Uterus (tissue), 4 donors: ENCODE measurements at regions of chr7 and their contacts with region 1.

Region 1: GRCh38 chr7:2555121-2556052 is at the start of gene BRAT1:
- DNase-seq: peak; percentile 95 to 97
- H3K4me3 ChIP-seq: peak within 1 kb of the TSS; percentile 69 to 94
- H3K27ac ChIP-seq: peak within 1 kb of the TSS; percentile 98
- H3K4me1 ChIP-seq: peaks cover 0 to 9% of the 10 kb centered on the region in 2 donors
- H3K27me3 ChIP-seq: no peaks in the 10 kb centered on the region
- CTCF ChIP-seq: peak in 3 of 4 experiments; percentile 25 to 46 (median 45)
- POLR2A ChIP-seq: peak; percentile 36 to 70
- total RNA-seq, gene BRAT1: 10.3 to 44.3 (median 36.0) TPM

Region 2: GRCh38 chr7:2248984-2249694 is 306.2 kb before region 1 on chr7:
- intact Hi-C with region 1: no loop called
- DNase-seq: peak; percentile 33 to 66
- H3K4me3 ChIP-seq: no peak overlapping the region
- H3K27ac ChIP-seq: peak overlapping the region; percentile 11 to 59
- H3K4me1 ChIP-seq: no peaks in the 10 kb centered on the region
- H3K27me3 ChIP-seq: no peaks in the 10 kb centered on the region
- CTCF ChIP-seq: peak in 2 of 4 experiments; percentile 7 to 12
- POLR2A ChIP-seq: no peak

Region 3: GRCh38 chr7:2632733-2633537 is 77.5 kb after region 1 on chr7:
- intact Hi-C with region 1: loop called (anchors 5 kb)
- DNase-seq: peak; percentile 58 to 65
- H3K4me3 ChIP-seq: peak overlapping the region; percentile 63 to 68
- H3K27ac ChIP-seq: peak overlapping the region; percentile 75 to 79
- H3K4me1 ChIP-seq: peaks cover 6 to 15% of the 10 kb centered on the region in 2 donors
- H3K27me3 ChIP-seq: no peaks in the 10 kb centered on the region
- CTCF ChIP-seq: no peak
- POLR2A ChIP-seq: no peak